ENCODE measurements at regions of chr1 and their contacts with region 1.

Region 1: GRCh38 chr1:216246577-216246976 is 176.7 kb downstream of the USH2A start:
- DNase-seq: no peak
- H3K27ac ChIP-seq: no peak overlapping the region
- CTCF ChIP-seq: no peak

Region 2: DNA sequence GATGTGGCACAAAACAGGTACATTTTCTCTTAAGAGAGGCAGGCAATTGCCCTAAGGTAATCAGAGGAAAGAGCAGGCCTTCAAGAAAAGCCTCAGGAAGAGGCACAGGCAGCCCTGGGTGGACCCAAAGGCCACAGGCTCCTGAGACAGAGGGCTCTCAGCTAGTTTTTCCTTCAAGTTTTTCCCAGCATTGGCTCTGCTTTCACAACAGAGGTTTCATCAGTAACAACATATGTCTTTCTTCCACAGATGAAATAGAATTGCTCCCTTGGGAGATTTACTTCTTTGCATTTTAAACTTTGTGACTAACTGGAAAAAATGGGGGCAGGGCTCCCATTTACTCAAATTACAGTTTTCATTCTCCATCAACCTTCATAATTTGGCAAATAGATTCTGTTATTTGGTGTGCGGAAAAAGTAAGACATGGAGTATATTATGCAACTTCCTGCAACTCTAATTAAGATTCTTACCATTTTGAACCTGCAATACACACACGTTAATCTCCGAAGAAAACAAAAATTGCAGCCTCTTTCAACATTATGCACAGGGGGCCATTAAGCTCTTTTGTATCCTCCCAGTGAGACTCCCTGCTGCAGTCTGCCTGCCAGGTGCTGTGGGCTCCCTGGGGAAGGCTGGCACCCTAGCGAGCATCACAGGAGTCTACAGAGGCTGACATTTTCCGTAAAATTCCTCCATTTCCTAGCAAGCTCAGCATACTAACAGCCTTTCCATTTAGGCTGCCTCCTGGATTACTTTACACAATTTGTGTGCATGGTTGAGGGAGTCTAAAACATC is 105.7 kb before region 1 on chr1:
- CTCF ChIA-PET with region 1: no interaction called
- POLR2A ChIA-PET with region 1: no interaction called
- DNase-seq: no peak
- H3K27ac ChIP-seq: no peak overlapping the region
- CTCF ChIP-seq: no peak

Region 3: GRCh38 chr1:216379441-216379840 is 132.9 kb after region 1 on chr1:
- CTCF ChIA-PET with region 1: interaction called, 10 read pairs
- POLR2A ChIA-PET with region 1: no interaction called
- DNase-seq: no peak
- H3K27ac ChIP-seq: no peak overlapping the region
- CTCF ChIP-seq: no peak